A549 (cell line): ENCODE measurements at regions of chr12 and their contacts with region 1.

Region 1: GRCh38 chr12:56266693-56267442 is at the start of gene COQ10A:
- DNase-seq: peak; percentile 94 to 98
- ATAC-seq: peak; percentile 91 to 94
- H3K4me3 ChIP-seq: peak within 1 kb of the TSS; percentile 47
- H3K27ac ChIP-seq: peak within 1 kb of the TSS; percentile 77 to 93
- H3K4me1 ChIP-seq: peaks cover 20% of the 10 kb centered on the region
- CTCF ChIP-seq: peak; percentile 51
- EP300 ChIP-seq: no peak
- POLR2A ChIP-seq: peak; percentile 96
- RAD21 ChIP-seq: peak; percentile 36 to 42; a peak in 3 of 5 replicates
- polyA plus RNA-seq, gene COQ10A: 40.9 and 41.2 TPM in 2 replicates

Region 2: DNA sequence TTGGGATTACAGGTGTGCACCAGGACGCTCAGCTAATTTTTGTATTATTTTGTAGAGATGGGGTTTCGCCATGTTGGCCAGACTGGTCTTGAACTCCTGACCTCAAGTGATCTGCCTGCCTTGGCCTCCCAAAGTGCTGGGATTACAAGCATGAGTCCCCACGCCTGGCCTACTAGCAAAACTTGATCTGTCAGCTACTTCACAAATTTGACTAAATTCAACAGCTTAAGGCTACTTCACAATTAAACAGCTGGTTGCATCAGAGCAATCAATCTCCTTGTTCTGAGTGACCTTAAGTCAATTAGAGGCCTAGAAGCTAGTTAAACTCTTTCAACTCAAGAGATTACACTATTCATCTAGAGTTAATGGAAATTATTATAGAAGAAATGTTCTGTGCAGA is 12.0 kb after region 1 on chr12:
- CTCF ChIA-PET with region 1: interaction called, 36 read pairs
- POLR2A ChIA-PET with region 1: interaction called, 9 read pairs
- DNase-seq: no peak
- ATAC-seq: no peak
- H3K4me3 ChIP-seq: no peak overlapping the region
- H3K27ac ChIP-seq: no peak overlapping the region
- H3K4me1 ChIP-seq: no peaks in the 10 kb centered on the region
- CTCF ChIP-seq: no peak
- EP300 ChIP-seq: no peak
- POLR2A ChIP-seq: no peak
- RAD21 ChIP-seq: no peak

Region 3: DNA sequence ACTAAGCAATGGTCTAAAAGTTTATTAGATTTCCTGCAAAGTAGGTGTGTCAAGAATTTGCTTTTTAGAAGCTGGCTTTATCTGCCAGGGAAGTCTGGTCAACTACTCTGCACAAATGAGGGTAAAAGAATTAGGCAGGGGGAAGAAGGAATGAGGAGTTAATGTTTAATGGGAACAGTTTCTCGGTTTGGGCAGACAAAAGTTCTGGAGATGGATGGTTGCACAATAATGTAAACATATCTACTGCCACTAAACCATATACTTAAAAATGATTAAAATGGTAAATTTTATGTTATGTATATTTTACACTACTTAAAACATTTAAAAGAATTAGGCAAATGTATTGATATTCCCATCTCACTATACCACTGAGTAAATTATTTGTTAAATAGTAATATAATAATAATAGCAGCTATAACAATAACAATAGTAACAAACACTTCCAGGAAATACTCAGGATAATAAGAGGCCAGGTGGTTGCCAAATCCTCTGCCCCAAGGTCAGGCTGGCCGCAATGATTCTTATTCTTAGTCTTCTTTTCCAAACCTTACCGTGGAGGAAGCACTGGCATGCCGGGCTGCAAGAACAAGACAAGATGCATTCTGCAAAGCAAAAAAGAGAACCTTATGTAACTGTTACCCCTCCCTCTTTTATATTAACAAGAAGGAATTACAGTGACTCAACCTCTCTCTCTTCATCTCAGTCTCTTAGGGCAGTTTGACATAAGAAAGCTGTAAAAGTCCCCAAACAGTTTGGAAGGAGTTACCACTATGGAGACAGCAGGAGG is 19.4 kb after region 1 on chr12:
- CTCF ChIA-PET with region 1: interaction called, 36 read pairs
- POLR2A ChIA-PET with region 1: interaction called, 13 read pairs
- DNase-seq: no peak
- ATAC-seq: peak; percentile 37 to 42; a peak in 5 of 6 replicates
- H3K4me3 ChIP-seq: 0 out of 3 replicates have a peak overlapping the region, but pooled peaks have one; percentile 1
- H3K27ac ChIP-seq: peak overlapping the region; percentile 48 to 70; a peak in 4 of 6 replicates
- H3K4me1 ChIP-seq: peaks cover 32% of the 10 kb centered on the region
- CTCF ChIP-seq: no peak
- EP300 ChIP-seq: no peak
- POLR2A ChIP-seq: no peak
- RAD21 ChIP-seq: no peak